ENCODE measurements at regions of chr2 and their contacts with region 1.

Region 1: GRCh38 chr2:61426267-61426897 is 44.5 kb downstream of the USP34 start:
- DNase-seq: peak; percentile 75
- ATAC-seq: peak; percentile 92
- H3K4me3 Mint-ChIP-seq: no peak overlapping the region
- H3K27ac Mint-ChIP-seq: peak overlapping the region; percentile 71
- H3K4me1 Mint-ChIP-seq: peaks cover 57% of the 10 kb centered on the region
- H3K27me3 Mint-ChIP-seq: no peaks in the 10 kb centered on the region
- CTCF ChIP-seq: peak; percentile 72

Region 2: GRCh38 chr2:61443342-61444041 is 17.1 kb after region 1 on chr2:
- CTCF ChIA-PET with region 1: interaction called, 26 read pairs
- POLR2A ChIA-PET with region 1: interaction called, 3 read pairs
- DNase-seq: no peak
- ATAC-seq: no peak
- H3K4me3 Mint-ChIP-seq: no peak overlapping the region
- H3K27ac Mint-ChIP-seq: peak overlapping the region; percentile 57
- H3K4me1 Mint-ChIP-seq: peaks cover 39% of the 10 kb centered on the region
- H3K27me3 Mint-ChIP-seq: no peaks in the 10 kb centered on the region
- CTCF ChIP-seq: no peak